Calu3 (cell line): ENCODE measurements at regions of chr7 and their contacts with region 1.

Region 1: GRCh38 chr7:15680446-15680845 is 6.0 kb downstream of the MEOX2 start:
- DNase-seq: no peak
- H3K4me3 Mint-ChIP-seq: peak overlapping the region; percentile 47
- H3K27ac Mint-ChIP-seq: peak overlapping the region; percentile 75
- H3K4me1 Mint-ChIP-seq: peaks cover 10% of the 10 kb centered on the region
- H3K27me3 Mint-ChIP-seq: peaks cover 12% of the 10 kb centered on the region
- CTCF ChIP-seq: no peak

Region 2: GRCh38 chr7:15503603-15504290 is 176.7 kb before region 1 on chr7:
- CTCF ChIA-PET with region 1: no interaction called
- intact Hi-C with region 1: no loop called
- DNase-seq: no peak
- H3K4me3 Mint-ChIP-seq: no peak overlapping the region
- H3K27ac Mint-ChIP-seq: no peak overlapping the region
- H3K4me1 Mint-ChIP-seq: no peaks in the 10 kb centered on the region
- H3K27me3 Mint-ChIP-seq: no peaks in the 10 kb centered on the region
- CTCF ChIP-seq: peak; percentile 25

Region 3: DNA sequence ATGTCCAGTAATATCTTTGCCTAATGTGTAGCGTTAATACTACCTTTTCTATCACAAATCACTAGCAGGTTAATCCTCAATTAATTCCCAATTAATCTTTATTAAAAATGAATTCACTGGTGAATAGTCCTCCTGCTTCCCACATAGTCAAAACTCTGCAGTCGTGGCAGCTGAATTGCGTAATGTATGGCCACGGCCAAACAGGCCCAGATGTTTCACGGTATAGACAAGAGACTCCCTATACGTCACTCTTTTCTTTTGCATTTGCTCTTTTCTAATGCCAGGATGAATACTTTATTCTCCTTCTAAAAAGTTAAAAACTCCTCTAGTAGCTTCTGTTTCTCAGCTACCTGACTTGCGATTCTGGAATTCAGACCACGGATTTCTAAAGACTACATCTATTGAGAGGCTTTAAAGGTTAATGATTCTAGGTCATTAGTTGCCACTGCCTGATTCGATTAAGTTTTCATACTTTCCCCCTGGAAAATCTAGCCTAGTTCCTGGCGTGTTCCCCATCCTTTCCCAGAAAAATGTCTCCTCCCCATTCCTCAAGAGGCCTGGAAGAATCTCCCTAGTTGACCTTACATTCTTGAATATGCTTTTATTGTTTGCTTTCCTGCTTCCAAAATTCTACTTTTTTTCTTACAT is 10.9 kb before region 1 on chr7:
- CTCF ChIA-PET with region 1: interaction called, 7 read pairs
- intact Hi-C with region 1: loop called (anchors 1 kb)
- DNase-seq: no peak
- H3K4me3 Mint-ChIP-seq: peak overlapping the region; percentile 31
- H3K27ac Mint-ChIP-seq: peak overlapping the region; percentile 37
- H3K4me1 Mint-ChIP-seq: peaks cover 57% of the 10 kb centered on the region
- H3K27me3 Mint-ChIP-seq: no peaks in the 10 kb centered on the region
- CTCF ChIP-seq: no peak

Region 4: DNA sequence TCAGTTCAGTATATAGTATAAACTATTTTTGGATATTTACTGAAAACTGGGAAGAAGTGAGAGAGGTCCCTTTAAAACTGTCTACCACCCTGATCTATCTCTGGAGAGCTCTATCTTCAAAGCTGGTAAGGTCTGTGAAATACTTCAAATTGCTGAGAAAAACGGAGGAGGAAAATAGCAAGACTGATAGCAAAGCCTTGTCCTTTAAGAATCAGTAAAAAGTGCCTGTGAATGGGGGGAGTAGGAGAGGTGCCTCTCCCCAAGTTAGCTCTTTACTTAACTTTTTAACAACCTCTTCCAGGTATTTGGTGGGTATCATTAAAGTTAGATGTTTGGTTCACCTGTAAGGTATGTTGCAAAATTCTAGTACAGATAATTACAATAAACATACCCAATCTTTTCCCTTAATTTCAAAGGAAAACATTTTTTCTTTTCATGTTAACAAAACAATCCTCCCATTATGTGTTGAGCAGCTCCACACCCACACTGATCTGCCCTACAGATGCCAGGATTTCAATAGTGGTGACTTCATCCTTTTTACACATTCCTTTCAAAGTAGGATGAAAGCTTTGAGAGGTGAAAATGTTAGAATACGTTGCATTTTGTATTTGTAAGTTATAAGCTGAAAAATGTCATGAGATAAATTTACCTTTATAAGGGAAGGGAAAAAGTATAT is 591.7 kb after region 1 on chr7:
- CTCF ChIA-PET with region 1: no interaction called
- intact Hi-C with region 1: no loop called
- DNase-seq: peak; percentile 39
- H3K4me3 Mint-ChIP-seq: no peak overlapping the region
- H3K27ac Mint-ChIP-seq: peak overlapping the region; percentile 28
- H3K4me1 Mint-ChIP-seq: peaks cover 23% of the 10 kb centered on the region
- H3K27me3 Mint-ChIP-seq: no peaks in the 10 kb centered on the region
- CTCF ChIP-seq: no peak